Dendritic cell treated with granulocyte-macrophage colony-stimulating factor and Interleukin-4, amounts not matched to agents 40 ng/mL and 50 ng/mL, for 4 days (primary cell): ENCODE measurements at regions of chr13 and their contacts with region 1.

Region 1: GRCh38 chr13:97212601-97213040 is 9.5 kb upstream of the MBNL2 start:
- H3K4me3 Mint-ChIP-seq: no peak overlapping the region
- H3K27ac Mint-ChIP-seq: no peak overlapping the region
- H3K4me1 Mint-ChIP-seq: peaks cover 23% of the 10 kb centered on the region
- H3K27me3 Mint-ChIP-seq: peaks cover 39% of the 10 kb centered on the region

Region 2: DNA sequence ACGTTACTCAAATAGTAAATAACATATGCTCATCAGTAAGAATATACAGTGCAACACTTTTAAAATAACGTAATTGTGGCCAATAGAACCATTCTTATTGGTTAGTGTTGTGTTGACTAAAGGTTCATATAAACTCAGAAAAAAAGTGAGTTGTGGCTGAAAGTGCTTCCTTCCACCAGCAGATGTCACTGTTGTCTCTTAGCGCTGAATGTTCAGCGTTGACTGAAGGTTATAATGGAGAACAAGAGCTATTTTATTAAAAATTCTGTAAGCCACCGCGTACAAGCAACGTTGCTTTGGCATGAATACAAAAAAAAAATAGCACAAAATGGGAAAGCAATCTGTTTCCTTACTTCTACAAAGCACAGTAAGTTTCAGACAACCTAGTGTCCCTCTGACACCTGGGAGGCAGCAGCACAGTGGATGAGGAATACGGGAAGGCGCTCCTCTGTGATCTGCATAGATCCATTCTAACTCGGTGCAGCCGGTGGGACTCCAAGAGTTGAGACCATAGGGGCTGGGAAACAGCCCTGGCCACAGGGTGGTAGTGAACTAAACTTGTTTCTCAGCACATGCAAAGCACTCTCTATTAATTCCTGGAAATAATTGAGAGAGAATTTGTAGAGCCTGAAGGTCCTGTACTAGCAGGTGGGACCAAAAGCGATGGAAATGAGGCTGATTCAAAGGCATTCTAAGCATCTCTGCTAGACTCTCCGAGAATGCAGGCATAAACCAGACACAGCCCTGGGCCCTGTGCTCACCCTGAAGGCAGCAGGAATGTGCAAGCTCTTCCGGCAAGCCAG is 194.4 kb before region 1 on chr13:
- intact Hi-C with region 1: loop called (anchors 10 kb)
- H3K4me3 Mint-ChIP-seq: no peak overlapping the region
- H3K27ac Mint-ChIP-seq: no peak overlapping the region
- H3K4me1 Mint-ChIP-seq: peaks cover 6% of the 10 kb centered on the region
- H3K27me3 Mint-ChIP-seq: peaks cover 54% of the 10 kb centered on the region

Region 3: GRCh38 chr13:97257800-97258799 is 45.5 kb after region 1 on chr13:
- intact Hi-C with region 1: no loop called
- H3K4me3 Mint-ChIP-seq: no peak overlapping the region
- H3K27ac Mint-ChIP-seq: peak overlapping the region; percentile 64
- H3K4me1 Mint-ChIP-seq: peaks cover 56% of the 10 kb centered on the region
- H3K27me3 Mint-ChIP-seq: no peaks in the 10 kb centered on the region

Region 4: DNA sequence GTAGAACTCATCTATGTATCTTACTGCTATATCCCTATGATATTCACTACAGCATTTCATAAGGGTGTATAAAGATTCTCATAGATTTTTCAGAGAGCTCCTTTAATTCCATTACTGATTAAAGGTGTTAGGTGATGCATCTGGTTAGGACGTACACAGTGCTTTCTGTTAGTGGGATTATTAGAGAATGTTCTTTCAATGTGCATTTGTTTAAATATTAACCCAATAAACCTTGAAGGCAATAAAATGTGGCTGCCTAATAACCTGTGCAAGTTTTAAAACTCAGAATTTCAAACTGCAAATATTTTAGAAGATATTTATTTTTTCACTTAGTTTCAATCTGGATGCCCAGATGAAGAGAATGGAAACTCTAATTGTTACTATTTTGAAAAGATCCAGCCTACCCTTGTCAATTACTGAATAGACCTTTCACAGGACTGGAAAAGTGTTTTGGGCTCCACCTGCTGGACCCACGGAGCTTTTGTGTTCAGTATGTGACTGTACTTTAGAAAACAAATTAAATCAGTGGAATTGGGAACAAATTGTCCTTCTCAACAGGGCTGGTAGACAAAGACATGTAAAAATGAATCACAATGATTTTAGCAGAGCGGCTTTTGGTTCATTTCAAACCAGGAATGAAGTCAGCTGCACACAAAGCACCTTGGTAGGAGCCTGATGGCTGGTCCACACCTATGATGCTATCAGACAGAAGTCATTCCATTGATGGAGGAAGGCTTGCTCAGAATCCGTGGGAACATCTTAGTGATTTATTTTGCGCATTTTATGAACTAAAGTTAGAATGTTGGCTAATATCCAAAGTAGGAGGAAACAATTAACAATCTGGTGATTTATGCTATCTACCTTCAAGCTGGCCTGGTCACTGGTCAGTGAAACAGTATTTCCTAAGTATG is 131.9 kb after region 1 on chr13:
- intact Hi-C with region 1: loop called (anchors 5 kb)
- H3K4me3 Mint-ChIP-seq: no peak overlapping the region
- H3K27ac Mint-ChIP-seq: no peak overlapping the region
- H3K4me1 Mint-ChIP-seq: no peaks in the 10 kb centered on the region
- H3K27me3 Mint-ChIP-seq: no peaks in the 10 kb centered on the region

Region 5: DNA sequence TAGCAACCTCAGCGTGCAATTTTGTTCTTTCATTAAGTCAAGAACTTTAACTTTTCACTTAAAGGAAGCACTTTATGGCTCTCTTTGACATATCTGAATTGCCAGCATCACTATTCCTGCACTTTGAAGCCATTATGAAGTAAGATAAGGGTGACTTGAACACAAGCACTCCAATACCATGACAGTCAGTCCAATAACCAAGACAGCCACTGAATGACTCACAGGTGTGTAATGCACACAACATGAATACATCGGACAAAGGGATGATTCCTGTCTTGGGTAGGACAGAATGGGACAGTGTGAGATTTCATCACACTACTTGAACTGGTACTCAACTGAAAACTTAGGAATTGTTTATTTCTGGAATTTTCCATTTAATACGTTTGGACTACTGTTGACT is 507.1 kb after region 1 on chr13:
- intact Hi-C with region 1: no loop called
- H3K4me3 Mint-ChIP-seq: no peak overlapping the region
- H3K27ac Mint-ChIP-seq: no peak overlapping the region
- H3K4me1 Mint-ChIP-seq: no peaks in the 10 kb centered on the region
- H3K27me3 Mint-ChIP-seq: no peaks in the 10 kb centered on the region